Activated T-helper 2 cell treated with anti-CD3 and anti-CD28 coated beads, Interferon-gamma antibody, Interleukin-2, Interleukin-4, amounts not matched to agents 10 μg/mL and 5 μg/mL and 100 μg/mL, durations not matched to agents 14 hours and 24 hours and 36 hours (primary cell): ENCODE measurements at regions of chr19 and their contacts with region 1.

Region 1: GRCh38 chr19:51986309-51987291 is at the start of gene ZNF350:
- DNase-seq: peak; percentile 84
- H3K4me3 Mint-ChIP-seq: peak within 1 kb of the TSS; percentile 95
- H3K27ac Mint-ChIP-seq: peak within 1 kb of the TSS; percentile 89
- H3K4me1 Mint-ChIP-seq: peaks cover 8% of the 10 kb centered on the region
- H3K27me3 Mint-ChIP-seq: no peaks in the 10 kb centered on the region
- total RNA-seq, gene ZNF350: 9.1 and 9.2 TPM in 2 replicates

Region 2: DNA sequence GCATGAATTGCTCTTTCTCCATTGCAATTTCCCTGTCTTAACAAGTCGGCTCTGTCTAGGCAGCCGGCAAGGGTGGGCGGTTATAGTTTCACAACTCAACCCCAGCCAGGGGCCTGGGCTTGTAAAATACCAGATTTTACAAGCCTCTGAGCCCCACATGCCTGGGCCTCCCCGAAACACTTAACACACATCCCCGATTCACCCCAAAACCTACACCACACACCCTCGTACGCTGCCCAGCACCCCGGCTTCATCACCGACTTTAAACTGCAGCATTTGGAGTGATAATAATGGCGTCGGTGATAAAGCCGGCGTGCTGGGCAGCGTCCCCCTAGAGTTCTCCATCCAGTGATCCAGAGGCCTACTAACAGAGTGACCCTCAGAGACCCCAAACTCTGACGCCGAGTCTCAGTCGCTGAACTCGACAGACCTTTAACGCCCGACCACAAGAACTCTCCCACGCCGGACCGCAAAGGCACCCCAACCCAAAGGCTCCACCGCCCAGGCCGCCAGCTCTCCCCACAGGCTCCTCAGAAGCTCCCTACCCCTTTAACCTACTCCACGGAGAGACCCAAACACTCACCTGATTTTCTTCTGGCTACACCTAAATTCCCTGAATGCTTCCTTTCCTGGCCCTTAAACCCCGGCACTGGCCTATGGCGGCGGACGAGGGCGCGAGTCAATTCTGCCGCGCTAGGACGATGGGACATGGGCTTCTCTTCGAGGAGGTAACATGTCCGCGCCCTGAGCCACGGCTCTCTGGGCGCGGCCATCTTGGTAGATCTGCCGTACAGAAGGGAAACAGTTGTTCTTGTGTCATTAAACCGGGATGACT is 82.1 kb before region 1 on chr19 and contains the start of gene ZNF649:
- intact Hi-C with region 1: loop called (anchors 1 kb)
- DNase-seq: peak; percentile 72
- H3K4me3 Mint-ChIP-seq: peak within 1 kb of the TSS; percentile 99
- H3K27ac Mint-ChIP-seq: peak within 1 kb of the TSS; percentile 98
- H3K4me1 Mint-ChIP-seq: peaks cover 13% of the 10 kb centered on the region
- H3K27me3 Mint-ChIP-seq: peaks cover 4% of the 10 kb centered on the region
- total RNA-seq, gene ZNF649: 11.8 and 12.1 TPM in 2 replicates

Region 3: DNA sequence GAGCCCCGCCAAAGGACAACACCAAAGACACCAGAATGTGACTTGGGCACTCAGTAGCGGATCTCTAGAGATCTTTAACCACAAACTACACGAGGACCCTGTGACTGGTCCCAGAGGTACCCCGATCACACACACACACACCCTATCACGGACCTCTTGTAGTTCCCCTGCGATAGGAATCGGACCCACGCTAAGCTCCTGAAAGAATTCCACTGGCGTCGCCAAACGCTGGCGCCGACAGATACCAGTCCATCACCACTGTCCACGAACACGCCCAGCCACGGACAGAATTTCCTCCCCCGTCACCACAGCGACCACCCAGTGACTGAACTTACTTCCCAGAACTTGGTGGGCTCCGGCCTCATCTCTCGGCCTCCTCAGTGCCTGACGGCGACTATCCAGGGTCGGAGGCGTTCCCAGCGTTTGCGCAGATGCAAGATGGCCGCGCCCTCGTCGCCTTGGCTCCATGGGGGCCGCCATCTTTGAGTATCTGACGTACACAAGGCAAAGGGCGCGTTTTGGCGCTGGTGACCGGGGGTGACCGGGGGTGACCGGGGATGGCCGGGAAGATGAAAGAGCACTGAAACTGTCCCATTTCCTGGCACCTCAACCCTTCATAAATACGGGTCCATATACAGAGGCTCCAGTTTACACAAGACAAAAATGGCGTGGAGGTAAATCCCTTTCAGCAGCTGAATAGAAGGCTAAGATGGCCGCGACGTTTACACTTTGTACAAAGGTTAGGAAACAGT is 21.4 kb after region 1 on chr19 and contains the start of gene ZNF615:
- intact Hi-C with region 1: loop called (anchors 2 kb)
- DNase-seq: peak; percentile 80
- H3K4me3 Mint-ChIP-seq: peak within 1 kb of the TSS; percentile 93
- H3K27ac Mint-ChIP-seq: peak within 1 kb of the TSS; percentile 96
- H3K4me1 Mint-ChIP-seq: peaks cover 10% of the 10 kb centered on the region
- H3K27me3 Mint-ChIP-seq: no peaks in the 10 kb centered on the region
- total RNA-seq, gene ZNF615: 6.3 and 6.7 TPM in 2 replicates

Region 4: GRCh38 chr19:52048555-52049501 is 62.2 kb after region 1 on chr19 and contains the start of gene ZNF432:
- intact Hi-C with region 1: loop called (anchors 1 kb)
- DNase-seq: peak; percentile 78
- H3K4me3 Mint-ChIP-seq: peak within 1 kb of the TSS; percentile 96
- H3K27ac Mint-ChIP-seq: peak within 1 kb of the TSS; percentile 99
- H3K4me1 Mint-ChIP-seq: peaks cover 9% of the 10 kb centered on the region
- H3K27me3 Mint-ChIP-seq: no peaks in the 10 kb centered on the region
- total RNA-seq, gene ZNF432: 13.3 and 15.5 TPM in 2 replicates

Region 5: DNA sequence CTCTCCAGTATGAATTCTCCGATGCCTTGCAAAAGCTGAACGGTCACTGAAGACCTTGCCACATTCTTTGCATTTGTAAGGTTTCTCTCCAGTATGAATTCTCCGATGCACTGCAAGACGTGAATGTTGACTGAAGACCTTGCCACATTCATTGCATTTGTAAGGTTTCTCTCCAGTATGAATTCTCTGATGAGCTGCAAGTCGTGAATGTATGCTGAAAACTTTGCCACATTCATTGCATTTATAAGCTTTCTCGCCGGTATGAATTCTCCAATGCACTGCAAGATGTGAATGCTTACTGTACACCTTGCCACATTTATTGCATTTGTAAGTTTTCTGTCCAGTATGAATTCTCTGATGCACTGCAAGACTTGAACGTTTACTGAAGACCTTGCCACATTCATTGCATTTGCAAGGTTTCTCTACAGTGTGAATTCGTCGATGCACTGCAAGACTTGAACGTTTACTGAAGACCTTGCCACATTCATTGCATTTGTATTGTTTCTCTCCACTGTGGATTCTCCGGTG is 129.0 kb after region 1 on chr19:
- intact Hi-C with region 1: no loop called
- DNase-seq: no peak
- H3K4me3 Mint-ChIP-seq: no peak overlapping the region
- H3K27ac Mint-ChIP-seq: no peak overlapping the region
- H3K4me1 Mint-ChIP-seq: no peaks in the 10 kb centered on the region
- H3K27me3 Mint-ChIP-seq: no peaks in the 10 kb centered on the region